B cell (primary cell): ENCODE measurements at regions of chr19 and their contacts with region 1.

Region 1: GRCh38 chr19:6718741-6719539 is 1.5 kb downstream of the C3 start:
- DNase-seq: peak; percentile 44
- ATAC-seq: peak; percentile 19
- H3K4me3 ChIP-seq: no peak overlapping the region
- H3K4me3 Mint-ChIP-seq: no peak overlapping the region
- H3K27ac ChIP-seq: no peak overlapping the region
- H3K27ac Mint-ChIP-seq: no peak overlapping the region
- H3K4me1 ChIP-seq: peaks cover 32 to 35% of the 10 kb centered on the region in 2 donors
- H3K4me1 Mint-ChIP-seq: peaks cover 36% of the 10 kb centered on the region
- H3K27me3 ChIP-seq: no peaks in the 10 kb centered on the region
- H3K27me3 Mint-ChIP-seq: no peaks in the 10 kb centered on the region
- CTCF ChIP-seq: no peak

Region 2: DNA sequence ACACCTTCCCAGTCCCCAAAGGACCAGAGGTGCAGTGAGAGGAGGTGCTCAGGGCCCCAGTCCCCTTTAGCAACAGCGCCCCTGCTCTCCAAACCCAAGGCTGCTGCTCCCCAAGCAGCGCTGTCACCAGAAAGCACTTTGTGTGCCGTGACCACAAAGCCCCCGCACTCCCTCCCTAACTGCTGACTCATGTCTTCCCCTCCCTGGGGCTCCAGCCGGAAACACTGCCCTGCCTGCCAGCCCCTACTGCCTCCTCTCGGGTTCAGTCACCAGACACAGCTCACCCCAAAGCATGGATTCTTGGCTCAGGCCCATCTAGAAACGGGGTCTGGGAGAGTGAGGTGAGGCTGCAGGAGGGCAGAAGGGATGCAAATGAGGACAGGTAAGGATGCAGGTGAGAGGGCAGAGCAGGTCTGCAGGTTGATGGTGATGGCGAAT is 44.1 kb before region 1 on chr19:
- CTCF ChIA-PET with region 1: no interaction called
- POLR2A ChIA-PET with region 1: no interaction called
- intact Hi-C with region 1: loop called (anchors 10 kb)
- DNase-seq: peak; percentile 40
- ATAC-seq: peak; percentile 69
- H3K4me3 ChIP-seq: no peak overlapping the region
- H3K4me3 Mint-ChIP-seq: peak overlapping the region; percentile 10
- H3K27ac ChIP-seq: no peak overlapping the region
- H3K27ac Mint-ChIP-seq: peak overlapping the region; percentile 41
- H3K4me1 ChIP-seq: peaks cover 13 to 21% of the 10 kb centered on the region in 2 donors
- H3K4me1 Mint-ChIP-seq: peaks cover 22% of the 10 kb centered on the region
- H3K27me3 ChIP-seq: peaks cover 0 to 23% (median 7%) of the 10 kb centered on the region in 4 experiments
- H3K27me3 Mint-ChIP-seq: peaks cover 45% of the 10 kb centered on the region
- CTCF ChIP-seq: no peak